ENCODE measurements at regions of chr6 and their contacts with region 1.

Region 1: DNA sequence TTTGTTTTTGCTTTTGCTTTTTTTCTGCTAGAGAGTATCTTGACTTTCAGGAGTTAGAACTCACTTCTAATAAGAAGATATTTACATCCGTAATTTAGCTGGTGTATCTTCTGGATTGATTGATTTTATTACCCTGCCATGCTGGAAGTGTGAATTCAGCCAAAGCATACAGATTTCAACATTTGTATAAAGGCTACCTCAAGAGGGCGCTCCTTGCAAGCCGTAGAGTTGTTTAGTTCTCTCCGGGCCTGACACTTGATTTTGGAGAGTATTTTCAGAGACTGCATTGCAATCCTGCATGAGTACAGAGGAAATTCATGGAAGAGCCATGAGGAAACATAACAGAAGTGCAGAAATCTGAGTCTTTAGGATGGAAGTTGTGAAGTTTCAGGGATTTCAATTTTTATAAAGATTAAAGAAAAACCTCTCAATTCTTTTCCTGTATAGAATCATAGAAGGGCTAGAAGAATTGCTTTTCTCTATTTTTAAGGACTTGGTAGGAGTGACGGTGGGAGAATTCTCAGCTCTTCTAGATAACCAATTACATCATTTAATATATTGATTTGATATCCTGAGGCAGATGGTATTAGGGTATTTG is 66.7 kb upstream of the TIAM2 start:
- DNase-seq: no peak

Region 2: GRCh38 chr6:154848580-154848979 is 79.8 kb before region 1 on chr6:
- intact Hi-C with region 1: no loop called
- DNase-seq: no peak

Region 3: GRCh38 chr6:154868143-154868594 is 60.3 kb before region 1 on chr6:
- intact Hi-C with region 1: loop called in 1 of 2 experiments (anchors 10 kb)
- DNase-seq: no peak

Region 4: GRCh38 chr6:154888426-154889295 is 39.8 kb before region 1 on chr6:
- intact Hi-C with region 1: loop called in 1 of 2 experiments (anchors 1 kb)
- DNase-seq: no peak

Region 5: DNA sequence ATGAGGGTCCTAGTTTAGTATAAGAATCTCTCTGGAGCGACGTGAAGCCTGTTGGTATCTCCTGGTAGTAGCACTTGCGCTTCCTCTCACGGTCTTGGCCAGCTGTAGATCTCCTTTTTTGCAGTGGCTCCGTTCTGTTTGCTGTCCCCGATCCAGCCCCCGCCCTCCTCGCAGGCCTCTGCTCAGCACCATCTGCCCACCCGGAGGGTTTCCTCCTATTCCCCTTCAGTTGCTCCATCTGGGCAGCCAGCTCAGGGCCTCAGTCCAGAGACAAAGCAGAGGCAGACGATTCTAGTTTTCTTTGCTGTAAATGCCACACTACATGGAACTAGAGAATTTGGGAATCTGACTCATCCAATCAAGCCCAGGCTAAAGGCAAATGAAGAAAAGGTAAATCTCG is 193.3 kb after region 1 on chr6:
- intact Hi-C with region 1: no loop called
- DNase-seq: no peak

Region 6: GRCh38 chr6:155174576-155175211 is 246.3 kb after region 1 on chr6:
- intact Hi-C with region 1: loop called (anchors 5 kb)
- DNase-seq: no peak